ENCODE measurements at regions of chr2 and their contacts with region 1.

Region 1: DNA sequence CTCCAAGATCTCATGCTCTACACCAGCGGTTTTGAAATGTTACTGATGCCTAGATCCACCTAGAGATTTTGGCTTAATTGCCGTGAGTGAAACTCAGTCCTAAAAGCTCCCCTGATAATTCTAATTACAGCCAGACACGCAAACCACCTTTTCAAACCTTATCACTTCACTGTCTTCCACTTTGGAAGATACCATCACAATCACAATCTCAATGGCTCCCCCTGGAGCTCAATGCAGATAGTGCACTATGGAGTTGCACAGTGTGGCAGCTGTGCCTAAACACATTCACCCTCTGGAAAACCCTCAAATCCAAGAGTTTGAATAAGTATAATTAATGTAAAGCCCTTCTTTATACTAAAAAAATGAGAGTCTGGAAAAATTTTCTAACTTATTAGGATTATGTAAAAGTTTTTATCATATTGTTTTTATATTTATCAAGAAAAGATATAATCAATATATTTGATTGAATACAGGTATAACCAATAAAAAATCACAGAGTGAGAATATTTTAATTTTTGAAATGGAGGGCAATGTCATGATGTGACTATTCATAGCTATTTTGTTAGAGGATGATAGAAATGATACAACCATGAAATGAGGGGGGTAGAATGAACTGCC is 102.9 kb upstream of the SLC8A1 start:
- DNase-seq: peak; percentile 6 to 67
- ATAC-seq: peak; percentile 75 to 95; a peak in 5 of 6 replicates
- H3K4me3 ChIP-seq: no peak overlapping the region
- H3K27ac ChIP-seq: no peak overlapping the region
- H3K4me1 ChIP-seq: no peaks in the 10 kb centered on the region
- CTCF ChIP-seq: peak; percentile 88
- EP300 ChIP-seq: no peak
- POLR2A ChIP-seq: no peak
- RAD21 ChIP-seq: peak; percentile 81 to 91

Region 2: DNA sequence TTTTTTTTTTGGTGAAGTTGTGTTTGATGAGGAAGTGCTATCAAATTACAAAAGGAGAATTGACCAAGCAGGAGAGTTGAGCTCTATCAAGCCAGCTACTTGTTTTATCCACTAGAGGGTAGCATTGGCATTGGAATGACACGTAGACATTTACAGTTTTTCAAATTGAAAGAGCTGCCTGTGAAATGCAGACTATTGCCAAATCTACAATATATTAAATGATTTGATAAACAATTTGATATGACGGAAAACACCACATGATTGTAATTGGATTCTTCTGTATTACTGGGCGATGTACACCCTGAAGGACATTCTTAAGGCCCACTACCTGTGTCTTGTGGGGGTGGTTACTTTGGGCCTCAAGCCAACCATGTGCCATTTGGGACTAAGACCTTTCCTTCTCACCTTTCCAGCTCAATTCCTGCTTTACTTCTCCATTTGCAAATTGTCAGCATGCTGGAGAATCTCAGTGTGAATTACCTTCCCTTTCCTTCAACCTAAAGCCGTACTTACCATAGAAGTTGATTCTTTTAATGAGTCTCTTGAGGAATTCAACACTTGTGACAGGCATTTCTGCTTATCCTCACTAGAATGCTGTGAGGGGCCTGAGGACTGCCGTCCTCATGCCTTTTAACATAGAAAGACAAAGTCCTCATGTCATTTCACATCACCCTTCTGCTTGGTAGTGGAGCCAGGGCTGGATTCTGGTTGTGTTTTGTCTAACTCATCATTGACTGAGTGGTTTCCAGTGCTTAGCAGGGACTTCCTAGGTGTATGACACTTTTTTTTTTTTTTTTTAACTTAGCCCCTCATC is 640.9 kb before region 1 on chr2:
- CTCF ChIA-PET with region 1: interaction called, 38 read pairs
- POLR2A ChIA-PET with region 1: no interaction called
- DNase-seq: peak; percentile 38 to 73
- ATAC-seq: peak; percentile 81 to 91
- H3K4me3 ChIP-seq: no peak overlapping the region
- H3K27ac ChIP-seq: no peak overlapping the region
- H3K4me1 ChIP-seq: no peaks in the 10 kb centered on the region
- CTCF ChIP-seq: peak; percentile 94
- EP300 ChIP-seq: no peak
- POLR2A ChIP-seq: no peak
- RAD21 ChIP-seq: peak; percentile 94 to 95

Region 3: GRCh38 chr2:40244675-40245074 is 310.1 kb before region 1 on chr2:
- CTCF ChIA-PET with region 1: interaction called, 25 read pairs
- POLR2A ChIA-PET with region 1: no interaction called
- DNase-seq: peak; percentile 27 to 57
- ATAC-seq: peak; percentile 93 to 98
- H3K4me3 ChIP-seq: no peak overlapping the region
- H3K27ac ChIP-seq: no peak overlapping the region
- H3K4me1 ChIP-seq: no peaks in the 10 kb centered on the region
- CTCF ChIP-seq: peak; percentile 59
- EP300 ChIP-seq: no peak
- POLR2A ChIP-seq: no peak
- RAD21 ChIP-seq: peak; percentile 55 to 67

Region 4: GRCh38 chr2:40363631-40364030 is 191.1 kb before region 1 on chr2:
- CTCF ChIA-PET with region 1: no interaction called
- POLR2A ChIA-PET with region 1: no interaction called
- DNase-seq: peak in 1 of 2 experiments; percentile 24
- ATAC-seq: peak in 1 of 2 experiments; percentile 45; a peak in 3 of 6 replicates
- H3K4me3 ChIP-seq: no peak overlapping the region
- H3K27ac ChIP-seq: no peak overlapping the region
- H3K4me1 ChIP-seq: peaks cover 10% of the 10 kb centered on the region; the same call in 1 of the 3 replicates
- CTCF ChIP-seq: no peak
- EP300 ChIP-seq: no peak
- POLR2A ChIP-seq: no peak
- RAD21 ChIP-seq: no peak

Region 5: GRCh38 chr2:40579247-40579646 is 24.5 kb after region 1 on chr2:
- CTCF ChIA-PET with region 1: interaction called, 11 read pairs
- POLR2A ChIA-PET with region 1: no interaction called
- DNase-seq: no peak
- ATAC-seq: no peak
- H3K4me3 ChIP-seq: no peak overlapping the region
- H3K27ac ChIP-seq: no peak overlapping the region
- H3K4me1 ChIP-seq: no peaks in the 10 kb centered on the region
- CTCF ChIP-seq: no peak
- EP300 ChIP-seq: no peak
- POLR2A ChIP-seq: no peak
- RAD21 ChIP-seq: no peak

Region 6: DNA sequence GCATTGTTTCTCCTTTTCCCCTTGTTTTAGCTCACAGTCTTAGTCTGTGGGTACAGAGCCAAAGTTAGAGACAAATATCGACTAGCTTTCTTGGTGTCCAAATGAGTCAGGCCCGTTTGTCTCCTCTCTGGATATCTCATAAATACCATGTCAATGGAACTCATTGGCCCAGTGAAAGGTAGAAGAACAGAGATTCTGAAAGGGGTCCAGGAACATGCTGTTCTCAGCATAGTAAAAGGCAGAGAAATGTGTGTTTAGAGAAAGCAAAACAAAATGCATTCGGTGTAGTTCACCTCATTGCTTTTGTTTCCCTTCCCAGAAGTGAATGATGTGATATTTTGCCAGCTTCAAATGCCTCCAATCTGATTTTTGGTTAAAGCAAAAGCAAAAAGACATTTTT is 135.7 kb after region 1 on chr2:
- CTCF ChIA-PET with region 1: no interaction called
- POLR2A ChIA-PET with region 1: no interaction called
- DNase-seq: no peak
- ATAC-seq: no peak
- H3K4me3 ChIP-seq: no peak overlapping the region
- H3K27ac ChIP-seq: no peak overlapping the region
- H3K4me1 ChIP-seq: no peaks in the 10 kb centered on the region
- CTCF ChIP-seq: no peak
- EP300 ChIP-seq: no peak
- POLR2A ChIP-seq: no peak
- RAD21 ChIP-seq: no peak

Measured in A549 (cell line).